A673 (cell line): ENCODE measurements at regions of chr6 and their contacts with region 1.

Region 1: GRCh38 chr6:138773177-138774091 is at the start of gene CCDC28A:
- DNase-seq: peak; percentile 97
- H3K4me3 ChIP-seq: peak within 1 kb of the TSS; percentile 75
- H3K27ac ChIP-seq: peak within 1 kb of the TSS; percentile 94
- H3K4me1 ChIP-seq: peaks cover 7% of the 10 kb centered on the region
- H3K27me3 ChIP-seq: no peaks in the 10 kb centered on the region
- CTCF ChIP-seq: no peak
- total RNA-seq, gene CCDC28A: 9.8 and 12.3 TPM in 2 replicates

Region 2: DNA sequence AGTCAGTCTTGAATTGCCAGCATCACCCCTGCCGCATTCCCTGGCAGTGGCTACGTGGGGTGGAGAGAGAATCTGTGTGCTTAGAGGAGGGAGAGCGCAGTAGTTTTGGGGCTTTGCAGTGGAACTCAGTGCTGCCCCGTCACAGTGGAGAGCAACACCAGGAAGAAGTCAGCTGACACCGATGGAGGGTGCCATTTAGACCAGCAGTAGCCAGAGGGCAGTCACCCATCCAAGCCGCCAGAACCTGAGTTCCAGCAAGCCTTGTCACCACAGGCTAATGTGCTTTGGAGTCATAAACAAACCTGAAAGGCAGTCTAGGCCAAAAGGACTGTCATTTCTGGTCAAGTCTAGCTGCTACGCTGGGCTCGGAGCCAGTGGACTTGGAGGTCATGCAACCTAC is 644.2 kb before region 1 on chr6:
- CTCF ChIA-PET with region 1: no interaction called
- POLR2A ChIA-PET with region 1: no interaction called
- intact Hi-C with region 1: no loop called
- DNase-seq: no peak
- H3K4me3 ChIP-seq: no peak overlapping the region
- H3K27ac ChIP-seq: no peak overlapping the region
- H3K4me1 ChIP-seq: no peaks in the 10 kb centered on the region
- H3K27me3 ChIP-seq: peaks cover 4% of the 10 kb centered on the region
- CTCF ChIP-seq: no peak

Region 3: DNA sequence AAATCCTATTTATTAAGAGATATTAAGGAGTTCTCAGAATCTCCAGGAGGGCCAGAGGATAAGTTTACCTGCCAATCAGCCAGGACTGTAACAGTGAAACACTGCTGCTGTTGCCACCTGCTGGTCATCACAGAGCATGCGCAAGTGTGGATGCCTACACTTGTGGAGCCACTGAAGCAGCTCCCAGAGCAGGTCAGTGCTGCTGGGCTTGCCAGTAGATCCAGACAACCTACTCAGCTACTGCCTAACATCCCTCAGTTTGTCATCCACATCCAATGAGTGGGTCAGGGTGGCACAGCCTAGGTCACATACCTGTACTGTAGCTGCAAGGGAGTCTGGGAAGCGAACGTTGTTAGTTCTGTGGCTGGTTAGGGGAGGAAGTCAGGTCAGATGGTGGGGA is 255.8 kb before region 1 on chr6:
- CTCF ChIA-PET with region 1: no interaction called
- POLR2A ChIA-PET with region 1: interaction called, 24 read pairs
- intact Hi-C with region 1: no loop called
- DNase-seq: peak; percentile 53
- H3K4me3 ChIP-seq: no peak overlapping the region
- H3K27ac ChIP-seq: no peak overlapping the region
- H3K4me1 ChIP-seq: peaks cover 8% of the 10 kb centered on the region
- H3K27me3 ChIP-seq: no peaks in the 10 kb centered on the region
- CTCF ChIP-seq: peak; percentile 78